Heart left ventricle (tissue), 16 donors: ENCODE measurements at regions of chr2 and their contacts with region 1.

Region 1: GRCh38 chr2:232697100-232697865 is at the start of gene GIGYF2:
- DNase-seq: peak; percentile 98
- ATAC-seq: peak; percentile 99
- H3K4me3 ChIP-seq: peak within 1 kb of the TSS; percentile 55 to 99 (median 94)
- H3K27ac ChIP-seq: peak within 1 kb of the TSS; percentile 73 to 98 (median 92)
- H3K4me1 ChIP-seq: peaks cover 2 to 47% (median 33%) of the 10 kb centered on the region in 12 donors
- H3K27me3 ChIP-seq: no peaks in the 10 kb centered on the region
- CTCF ChIP-seq: no peak
- POLR2A ChIP-seq: peak in 1 of 2 donors; percentile 56
- total RNA-seq, gene GIGYF2: 48.0 to 78.1 (median 61.3) TPM

Region 2: GRCh38 chr2:232741294-232741693 is 44.0 kb after region 1 on chr2:
- intact Hi-C with region 1: loop called in 1 of 10 experiments (anchors 2 kb)
- DNase-seq: no peak
- ATAC-seq: no peak
- H3K4me3 ChIP-seq: no peak overlapping the region
- H3K27ac ChIP-seq: no peak overlapping the region
- H3K4me1 ChIP-seq: peaks cover 0 to 5% (median 0%) of the 10 kb centered on the region in 12 donors
- H3K27me3 ChIP-seq: no peaks in the 10 kb centered on the region
- CTCF ChIP-seq: no peak
- POLR2A ChIP-seq: no peak